Mammary epithelial cell (primary cell): ENCODE measurements at regions of chr5 and their contacts with region 1.

Region 1: DNA sequence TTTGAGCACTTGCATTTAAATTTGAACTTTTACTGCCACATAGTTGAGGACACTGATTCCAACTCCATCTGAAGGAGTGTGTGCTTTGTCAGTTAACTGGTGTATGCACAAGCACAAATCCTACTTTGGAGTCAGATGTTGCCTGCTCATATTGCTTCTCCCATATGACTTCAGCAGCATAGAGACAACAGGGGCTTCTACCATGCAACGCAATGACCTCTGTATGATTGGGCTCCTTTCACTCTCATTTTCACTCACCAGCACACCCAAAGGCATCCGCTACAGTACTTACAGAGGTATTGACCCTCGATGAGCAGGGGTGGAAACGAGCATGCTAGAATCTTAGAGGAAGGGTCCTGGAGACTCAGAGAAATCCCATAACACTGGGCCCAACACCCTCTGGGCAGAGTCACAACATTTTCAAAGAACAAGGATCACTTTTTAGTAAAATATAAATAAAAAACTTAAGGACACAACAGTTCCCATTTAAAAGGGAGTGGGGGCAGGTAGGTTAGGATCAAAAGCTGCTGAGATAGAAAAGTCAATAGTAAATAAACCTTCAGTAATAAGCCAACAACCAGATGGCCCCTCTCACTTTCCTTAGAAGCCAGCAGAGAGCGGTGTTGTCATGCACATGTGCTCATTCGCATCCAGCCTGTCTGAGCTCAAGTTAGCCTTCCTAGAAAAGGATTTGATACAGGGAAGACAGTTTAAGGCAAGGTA is 203.8 kb downstream of the SNCAIP start:
- DNase-seq: peak; percentile 39
- H3K4me3 ChIP-seq: no peak overlapping the region
- H3K27ac ChIP-seq: no peak overlapping the region
- H3K4me1 ChIP-seq: no peaks in the 10 kb centered on the region
- H3K27me3 ChIP-seq: no peaks in the 10 kb centered on the region
- CTCF ChIP-seq: peak; percentile 61 to 74

Region 2: GRCh38 chr5:121408778-121409177 is 1107.1 kb before region 1 on chr5:
- CTCF ChIA-PET with region 1: no interaction called
- dilution Hi-C with region 1: no loop called
- in situ Hi-C with region 1: no loop called
- intact Hi-C with region 1: no loop called
- DNase-seq: no peak
- H3K4me3 ChIP-seq: no peak overlapping the region
- H3K27ac ChIP-seq: no peak overlapping the region
- H3K4me1 ChIP-seq: no peaks in the 10 kb centered on the region
- H3K27me3 ChIP-seq: no peaks in the 10 kb centered on the region
- CTCF ChIP-seq: no peak

Region 3: GRCh38 chr5:122831984-122832383 is 316.1 kb after region 1 on chr5:
- CTCF ChIA-PET with region 1: no interaction called
- dilution Hi-C with region 1: no loop called
- in situ Hi-C with region 1: no loop called
- intact Hi-C with region 1: no loop called
- DNase-seq: no peak
- H3K4me3 ChIP-seq: no peak overlapping the region
- H3K27ac ChIP-seq: no peak overlapping the region
- H3K4me1 ChIP-seq: no peaks in the 10 kb centered on the region
- H3K27me3 ChIP-seq: no peaks in the 10 kb centered on the region
- CTCF ChIP-seq: no peak

Region 4: DNA sequence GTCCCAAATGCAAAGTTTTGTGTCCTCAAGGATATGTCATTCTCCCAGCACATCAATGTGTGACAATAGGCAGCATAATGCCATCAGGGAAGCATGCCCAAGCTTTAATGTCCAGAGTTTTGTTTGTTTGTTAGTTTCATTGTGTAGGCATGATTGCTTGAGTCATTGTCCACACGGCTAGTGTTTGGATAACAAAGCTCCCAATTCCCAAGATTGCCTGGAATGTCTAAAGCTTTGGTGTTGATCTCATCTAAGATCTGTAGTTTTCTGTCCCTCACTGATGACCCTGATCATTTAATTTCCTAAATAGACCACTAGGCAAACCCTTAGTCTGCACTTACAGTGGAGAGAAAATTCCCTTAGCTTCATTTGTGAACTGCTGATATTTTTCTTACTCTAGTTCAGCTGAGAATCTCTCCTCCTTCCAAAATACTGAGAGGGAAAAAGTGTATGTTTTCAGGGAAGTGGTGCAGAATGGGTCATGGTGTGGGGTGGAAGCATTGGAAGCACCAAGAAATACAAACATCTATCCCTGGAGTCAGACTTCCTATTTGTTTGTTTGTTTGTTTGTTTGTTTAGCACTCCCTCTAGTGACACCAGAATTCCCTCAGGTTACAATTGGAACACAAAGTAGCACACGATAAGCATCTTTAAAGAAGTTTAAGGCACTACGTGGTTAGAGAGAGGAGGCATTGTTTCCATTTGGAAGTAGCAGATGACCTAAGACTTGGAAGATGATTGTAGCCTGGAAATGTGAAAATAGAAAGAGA is 700.2 kb after region 1 on chr5:
- CTCF ChIA-PET with region 1: no interaction called
- dilution Hi-C with region 1: no loop called
- in situ Hi-C with region 1: no loop called
- intact Hi-C with region 1: loop called (anchors 2 kb)
- DNase-seq: no peak
- H3K4me3 ChIP-seq: no peak overlapping the region
- H3K27ac ChIP-seq: no peak overlapping the region
- H3K4me1 ChIP-seq: no peaks in the 10 kb centered on the region
- H3K27me3 ChIP-seq: no peaks in the 10 kb centered on the region
- CTCF ChIP-seq: peak in 1 of 2 donors; percentile 38

Region 5: DNA sequence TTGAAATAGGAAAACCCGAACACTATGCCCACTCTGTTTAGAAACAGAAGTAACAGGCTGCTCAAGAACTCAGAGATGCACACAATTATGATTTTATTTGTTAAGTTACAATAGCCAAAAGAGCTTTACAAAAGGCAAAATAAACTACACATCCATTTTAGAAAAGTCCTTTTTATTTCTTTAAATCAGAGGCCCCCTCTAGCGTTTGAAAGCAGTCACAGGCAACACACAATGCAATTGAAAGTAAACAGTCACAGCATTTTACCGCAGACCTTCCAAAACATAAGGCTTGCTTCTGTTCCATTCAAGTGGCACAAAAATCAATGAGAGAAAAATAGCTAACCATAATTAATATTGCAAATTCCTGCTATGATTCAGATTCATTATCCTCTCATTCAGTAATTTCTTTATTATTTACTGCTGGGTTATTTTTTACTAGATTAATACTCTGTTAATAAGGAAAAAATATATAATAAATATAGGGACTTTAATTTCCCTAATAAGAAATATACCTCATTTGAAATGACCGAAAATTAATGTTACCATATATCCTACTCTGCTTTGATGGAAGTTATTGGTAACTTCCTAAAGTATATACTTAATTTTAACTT is 829.1 kb after region 1 on chr5:
- CTCF ChIA-PET with region 1: no interaction called
- dilution Hi-C with region 1: no loop called
- in situ Hi-C with region 1: loop called (anchors 25 kb)
- intact Hi-C with region 1: loop called (anchors 1 kb)
- DNase-seq: peak; percentile 4
- H3K4me3 ChIP-seq: no peak overlapping the region
- H3K27ac ChIP-seq: no peak overlapping the region
- H3K4me1 ChIP-seq: no peaks in the 10 kb centered on the region
- H3K27me3 ChIP-seq: no peaks in the 10 kb centered on the region
- CTCF ChIP-seq: peak; percentile 42 to 51

Region 6: DNA sequence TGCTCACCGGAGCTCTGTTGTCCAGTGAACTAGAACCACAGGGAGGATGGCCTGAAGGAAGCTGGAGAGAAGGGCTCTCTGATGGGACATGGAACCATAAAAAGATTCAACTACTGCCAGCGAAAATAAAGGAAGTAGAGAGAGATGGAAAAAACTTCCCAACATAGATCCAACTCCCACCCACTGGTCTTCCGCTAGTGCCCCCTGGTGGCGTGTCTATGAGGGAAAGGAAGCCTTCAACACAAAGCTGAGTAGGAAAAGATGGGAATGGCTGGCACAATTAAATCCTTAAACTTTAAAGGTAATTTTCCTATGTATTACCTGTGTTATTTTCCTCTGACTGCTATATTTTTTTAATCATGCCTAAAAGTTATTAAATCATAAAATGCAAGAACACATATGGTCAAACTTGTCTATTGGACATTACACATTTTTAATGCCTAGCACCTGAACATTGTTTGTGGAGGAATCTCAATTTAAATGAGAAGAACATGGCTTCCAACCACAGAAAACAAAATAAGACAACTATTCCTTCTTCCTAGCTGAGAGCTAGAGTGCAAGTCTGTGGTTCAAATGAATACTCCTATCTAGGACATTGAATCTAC is 855.8 kb after region 1 on chr5:
- CTCF ChIA-PET with region 1: interaction called, 7 read pairs
- dilution Hi-C with region 1: no loop called
- in situ Hi-C with region 1: loop called in 1 of 2 experiments (anchors 25 kb)
- intact Hi-C with region 1: loop called (anchors 1 kb)
- DNase-seq: peak; percentile 16
- H3K4me3 ChIP-seq: no peak overlapping the region
- H3K27ac ChIP-seq: no peak overlapping the region
- H3K4me1 ChIP-seq: no peaks in the 10 kb centered on the region
- H3K27me3 ChIP-seq: no peaks in the 10 kb centered on the region
- CTCF ChIP-seq: peak; percentile 53 to 63

Region 7: DNA sequence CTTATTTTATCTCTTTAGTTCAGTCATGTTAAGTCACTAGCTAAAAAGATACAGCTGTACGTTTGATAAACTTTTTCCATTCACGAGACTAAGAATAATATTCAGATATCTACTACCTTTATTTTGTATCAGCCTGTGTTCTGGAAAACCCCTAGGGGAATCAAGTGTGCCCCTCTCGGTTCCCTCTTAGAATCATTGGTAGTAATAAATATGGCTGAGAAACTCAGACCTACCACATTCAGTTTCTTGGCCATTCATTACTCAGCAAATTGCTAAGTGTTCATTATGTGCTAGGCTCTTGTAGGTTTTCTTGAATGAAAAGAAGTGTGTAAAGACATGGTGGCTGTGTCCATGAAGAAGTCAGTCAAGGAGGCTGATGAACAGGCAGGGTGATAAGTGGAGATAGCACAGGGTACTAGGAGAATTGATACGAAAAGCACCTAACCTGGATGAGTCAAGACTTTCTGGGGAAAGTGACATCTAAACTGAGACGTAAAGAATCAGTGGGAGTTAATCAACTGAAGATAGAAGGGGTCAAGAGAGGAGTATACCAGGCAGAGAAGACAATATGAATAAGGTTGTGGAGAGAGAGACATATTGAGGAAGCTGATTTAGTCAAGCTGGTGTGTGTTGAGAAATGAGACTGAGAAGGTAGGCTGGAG is 1082.3 kb after region 1 on chr5:
- CTCF ChIA-PET with region 1: no interaction called
- dilution Hi-C with region 1: no loop called
- in situ Hi-C with region 1: no loop called
- intact Hi-C with region 1: loop called (anchors 10 kb)
- DNase-seq: no peak
- H3K4me3 ChIP-seq: no peak overlapping the region
- H3K27ac ChIP-seq: no peak overlapping the region
- H3K4me1 ChIP-seq: no peaks in the 10 kb centered on the region
- H3K27me3 ChIP-seq: no peaks in the 10 kb centered on the region
- CTCF ChIP-seq: no peak